ENCODE measurements at regions of chr5 and their contacts with region 1.

Region 1: DNA sequence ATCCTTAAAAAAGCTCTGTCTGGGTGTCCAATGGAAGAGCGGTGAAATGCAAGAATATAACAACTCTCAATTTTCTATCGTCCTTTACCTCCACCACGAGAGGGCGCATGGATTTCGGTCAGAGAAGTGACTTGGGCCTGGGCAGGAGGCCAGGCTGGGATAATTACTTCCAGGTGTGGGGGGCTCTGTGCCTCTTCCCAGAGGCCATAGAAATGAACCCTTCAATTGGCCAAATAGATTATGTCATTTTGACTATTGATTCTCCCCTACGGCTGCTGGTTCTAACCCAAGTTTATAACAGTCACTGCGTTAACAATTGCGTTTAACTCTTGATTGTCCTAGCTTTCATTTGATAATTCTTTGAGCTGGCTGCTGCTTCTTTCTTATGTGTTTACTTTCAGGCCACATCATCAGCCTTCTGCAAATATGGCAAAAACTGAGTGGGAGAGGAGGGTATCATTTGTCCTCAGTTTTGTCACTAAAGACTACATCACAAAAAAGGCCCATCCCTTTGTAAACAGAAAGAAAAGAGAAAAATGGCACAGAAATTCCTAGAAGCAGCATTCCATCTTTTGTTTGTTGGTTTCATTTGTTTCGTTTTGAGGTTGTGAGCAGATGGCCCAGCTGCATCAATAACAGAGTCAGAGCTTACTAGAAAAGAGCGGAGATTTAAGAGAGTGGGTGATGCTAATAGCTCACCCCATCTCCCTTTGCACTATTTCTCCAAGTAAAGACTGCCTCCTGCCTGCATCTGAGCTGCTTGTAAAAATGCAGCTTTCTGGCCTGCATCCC is 45.4 kb upstream of the ZFR start:
- DNase-seq: peak; percentile 80 to 89 (median 85)
- ATAC-seq: peak; percentile 62 to 81 (median 70)
- H3K4me3 ChIP-seq: peak overlapping the region in 1 of 12 donors; percentile 22
- H3K27ac ChIP-seq: no peak overlapping the region
- H3K4me1 ChIP-seq: peaks cover 0 to 11% (median 3%) of the 10 kb centered on the region in 12 donors
- H3K27me3 ChIP-seq: no peaks in the 10 kb centered on the region
- CTCF ChIP-seq: peak; percentile 69 to 85 (median 77)
- POLR2A ChIP-seq: no peak

Region 2: DNA sequence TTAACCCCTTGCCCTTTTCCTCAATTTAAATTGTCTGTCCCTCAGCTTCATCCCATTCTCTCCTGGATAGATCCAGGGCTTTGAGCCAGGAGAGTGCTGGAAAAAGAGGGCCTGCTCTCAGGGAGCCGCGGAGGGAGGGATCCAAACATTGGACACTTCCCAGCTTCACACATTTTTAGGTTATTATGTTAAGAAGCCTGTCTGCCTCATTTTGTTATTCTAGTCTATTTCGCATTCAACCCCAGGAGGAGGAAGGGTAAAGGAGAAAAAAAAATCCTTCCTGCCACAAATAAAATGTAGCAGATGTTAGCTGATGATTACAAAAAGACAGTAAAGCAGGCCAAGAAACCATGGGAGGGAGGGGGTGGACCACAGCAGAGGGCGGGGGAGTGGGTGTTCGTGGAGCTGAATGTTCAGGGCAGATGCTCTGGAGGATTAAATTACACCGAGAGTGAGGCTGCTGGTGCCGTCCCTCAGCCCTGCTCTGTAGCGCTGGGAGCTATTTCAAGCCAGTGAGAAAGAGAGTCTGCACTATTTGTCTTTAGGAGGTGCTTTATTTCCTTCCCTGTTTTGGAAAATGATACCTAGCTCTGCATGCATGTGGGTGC is 15.1 kb after region 1 on chr5:
- intact Hi-C with region 1: loop called in 1 of 10 experiments (anchors 1 kb)
- DNase-seq: peak; percentile 58 to 63 (median 62)
- ATAC-seq: peak; percentile 77 to 88 (median 82)
- H3K4me3 ChIP-seq: peak overlapping the region in 1 of 12 donors; percentile 1
- H3K27ac ChIP-seq: peak overlapping the region in 6 of 12 donors; percentile 8 to 73 (median 19)
- H3K4me1 ChIP-seq: peaks cover 0 to 43% (median 27%) of the 10 kb centered on the region in 12 donors
- H3K27me3 ChIP-seq: peaks cover 0 to 5% (median 0%) of the 10 kb centered on the region in 9 donors
- CTCF ChIP-seq: no peak
- POLR2A ChIP-seq: no peak

Region 3: GRCh38 chr5:32613050-32613672 is 123.2 kb after region 1 on chr5:
- intact Hi-C with region 1: loop called (anchors 1 to 5 kb)
- DNase-seq: peak; percentile 72 to 82 (median 80)
- ATAC-seq: peak; percentile 36 to 71 (median 68)
- H3K4me3 ChIP-seq: no peak overlapping the region
- H3K27ac ChIP-seq: no peak overlapping the region
- H3K4me1 ChIP-seq: peaks cover 0 to 26% (median 9%) of the 10 kb centered on the region in 12 donors
- H3K27me3 ChIP-seq: no peaks in the 10 kb centered on the region
- CTCF ChIP-seq: peak; percentile 82 to 96 (median 91)
- POLR2A ChIP-seq: no peak

Region 4: GRCh38 chr5:33180900-33181299 is 690.9 kb after region 1 on chr5:
- intact Hi-C with region 1: loop called in 1 of 10 experiments (anchors 10 kb)
- DNase-seq: no peak
- ATAC-seq: peak in 2 of 4 donors; percentile 50 to 60
- H3K4me3 ChIP-seq: no peak overlapping the region
- H3K27ac ChIP-seq: no peak overlapping the region
- H3K4me1 ChIP-seq: peaks cover 0 to 6% (median 0%) of the 10 kb centered on the region in 12 donors
- H3K27me3 ChIP-seq: no peaks in the 10 kb centered on the region
- CTCF ChIP-seq: peak in 10 of 12 donors; percentile 14 to 64 (median 39)
- POLR2A ChIP-seq: no peak

Region 5: GRCh38 chr5:33423018-33423630 is 933.1 kb after region 1 on chr5:
- intact Hi-C with region 1: loop called in 2 of 10 experiments (anchors 5 to 10 kb)
- DNase-seq: no peak
- ATAC-seq: peak in 1 of 4 donors; percentile 26
- H3K4me3 ChIP-seq: no peak overlapping the region
- H3K27ac ChIP-seq: no peak overlapping the region
- H3K4me1 ChIP-seq: peaks cover 0 to 12% (median 3%) of the 10 kb centered on the region in 12 donors
- H3K27me3 ChIP-seq: no peaks in the 10 kb centered on the region
- CTCF ChIP-seq: peak; percentile 16 to 61 (median 48)
- POLR2A ChIP-seq: no peak